ENCODE measurements at regions of chr2 and their contacts with region 1.

Region 1: GRCh38 chr2:73233154-73233931 is at the start of gene PRADC1:
- DNase-seq: peak; percentile 100
- total RNA-seq, gene PRADC1: 85.8 TPM

Region 2: GRCh38 chr2:73112913-73113633 is 120.3 kb before region 1 on chr2 and contains the start of gene RAB11FIP5:
- intact Hi-C with region 1: loop called (anchors 5 kb)
- DNase-seq: peak; percentile 88
- total RNA-seq, gene RAB11FIP5: 38.1 TPM

Region 3: GRCh38 chr2:73163483-73164367 is 69.6 kb before region 1 on chr2:
- intact Hi-C with region 1: no loop called
- DNase-seq: no peak

Region 4: DNA sequence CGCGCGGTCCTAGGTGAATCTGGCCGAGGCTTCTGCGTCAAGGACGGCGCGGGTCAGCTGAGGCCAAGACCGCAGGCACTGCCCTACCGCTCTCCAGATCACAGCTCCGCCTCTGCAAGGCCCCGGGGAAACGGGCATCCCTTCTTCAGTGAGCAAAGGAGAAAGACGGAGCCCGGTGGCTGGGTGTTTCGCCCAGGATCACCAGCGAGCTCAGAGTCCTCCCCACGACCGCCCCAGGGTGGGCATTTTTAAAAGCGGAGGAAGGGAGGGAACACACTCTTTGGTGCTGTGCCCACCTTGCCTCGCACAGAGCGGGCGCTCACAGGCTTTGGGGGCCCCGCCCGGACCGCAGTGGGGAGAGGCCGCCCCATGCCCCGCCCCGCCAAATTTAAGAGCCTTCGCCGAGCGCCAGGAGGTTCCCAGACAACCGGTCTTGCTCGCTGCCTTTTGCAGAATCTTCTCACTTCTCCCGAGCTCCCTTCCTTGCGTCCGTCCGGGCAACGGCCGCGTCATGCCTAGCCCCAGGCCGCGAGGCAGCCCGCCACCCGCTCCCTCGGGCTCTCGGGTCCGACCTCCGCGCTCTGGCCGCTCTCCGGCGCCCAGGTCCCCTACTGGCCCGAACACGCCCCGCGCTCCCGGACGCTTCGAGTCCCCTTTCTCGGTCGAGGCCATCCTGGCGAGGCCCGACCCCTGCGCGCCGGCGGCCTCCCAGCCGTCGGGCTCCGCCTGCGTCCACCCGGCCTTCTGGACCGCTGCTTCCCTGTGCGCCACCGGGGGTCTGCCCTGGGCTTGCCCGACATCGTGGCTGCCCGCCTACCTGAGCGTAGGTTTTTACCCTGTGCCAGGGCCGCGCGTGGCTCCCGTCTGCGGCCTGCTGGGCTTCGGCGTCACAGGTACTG is 30.9 kb before region 1 on chr2 and contains the start of gene NOTO:
- intact Hi-C with region 1: no loop called
- DNase-seq: no peak
- total RNA-seq, gene NOTO: not detected

Region 5: GRCh38 chr2:73212448-73213176 is 20.7 kb before region 1 on chr2:
- intact Hi-C with region 1: loop called (anchors 1 kb)
- DNase-seq: peak; percentile 82

Region 6: GRCh38 chr2:73293534-73294171 is 60.3 kb after region 1 on chr2 and contains the start of gene EGR4:
- intact Hi-C with region 1: no loop called
- DNase-seq: no peak
- total RNA-seq, gene EGR4: not detected

Region 7: DNA sequence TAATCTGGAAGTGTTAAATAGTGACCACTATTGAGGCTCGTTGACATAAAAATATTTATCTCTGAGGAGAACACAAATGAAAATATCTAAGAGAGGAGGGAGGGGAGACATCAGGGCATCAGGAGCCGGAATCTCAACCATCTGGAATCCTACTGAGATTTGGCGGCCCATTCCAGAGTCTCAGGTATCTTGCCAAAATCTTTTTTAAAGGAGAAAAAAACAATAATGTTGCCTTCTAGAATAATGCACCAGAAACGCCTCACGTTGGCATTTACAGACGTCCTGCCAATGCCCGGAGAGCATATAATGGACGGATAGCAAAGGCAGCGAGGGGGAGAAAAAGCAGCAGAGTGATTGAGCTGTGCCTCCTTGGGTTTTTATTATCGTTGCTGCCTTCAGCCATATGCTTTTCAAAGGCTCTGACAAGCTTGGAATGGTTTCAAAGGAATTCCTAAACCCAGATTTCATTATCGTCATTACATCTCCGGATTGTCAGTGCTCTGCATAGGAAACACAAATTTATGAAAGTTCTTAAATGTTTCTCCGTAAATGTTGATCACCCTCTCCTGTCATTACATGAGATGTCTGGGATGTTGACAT is 90.9 kb after region 1 on chr2:
- intact Hi-C with region 1: no loop called
- DNase-seq: no peak

Region 8: DNA sequence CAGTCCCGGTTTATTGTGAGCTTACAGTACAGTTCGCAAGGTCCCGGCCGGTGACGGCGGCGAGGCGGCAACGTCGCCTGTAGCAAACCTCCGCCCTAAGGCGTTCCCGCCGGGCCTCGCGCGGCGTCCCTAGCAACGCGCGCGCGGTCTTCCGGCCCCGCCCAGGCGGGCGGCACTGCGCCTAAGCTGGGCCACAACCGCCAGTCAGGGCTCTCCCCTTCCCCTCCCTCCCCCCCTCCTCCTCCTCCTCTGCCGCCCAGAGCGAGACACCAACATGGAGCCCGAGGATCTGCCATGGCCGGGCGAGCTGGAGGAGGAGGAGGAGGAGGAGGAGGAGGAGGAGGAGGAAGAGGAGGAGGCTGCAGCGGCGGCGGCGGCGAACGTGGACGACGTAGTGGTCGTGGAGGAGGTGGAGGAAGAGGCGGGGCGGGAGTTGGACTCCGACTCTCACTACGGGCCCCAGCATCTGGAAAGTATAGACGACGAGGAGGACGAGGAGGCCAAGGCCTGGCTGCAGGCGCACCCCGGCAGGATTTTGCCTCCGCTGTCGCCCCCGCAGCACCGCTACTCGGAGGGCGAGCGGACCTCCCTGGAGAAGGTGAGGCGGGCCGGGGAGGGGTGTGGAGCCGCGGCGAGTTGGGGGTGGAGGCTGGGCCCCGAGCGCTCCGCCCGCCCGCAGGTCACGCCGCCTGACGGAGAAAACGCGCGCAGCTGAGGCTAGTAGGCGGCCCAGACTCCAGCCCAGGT is 152.4 kb after region 1 on chr2 and contains the start of gene ALMS1:
- intact Hi-C with region 1: loop called (anchors 5 kb)
- DNase-seq: peak; percentile 94
- total RNA-seq, gene ALMS1: 11.6 TPM

Measured in cardiac septum (tissue), 1 donor.